Breast epithelium (tissue), 4 donors: ENCODE measurements at regions of chr4 and their contacts with region 1.

Region 1: DNA sequence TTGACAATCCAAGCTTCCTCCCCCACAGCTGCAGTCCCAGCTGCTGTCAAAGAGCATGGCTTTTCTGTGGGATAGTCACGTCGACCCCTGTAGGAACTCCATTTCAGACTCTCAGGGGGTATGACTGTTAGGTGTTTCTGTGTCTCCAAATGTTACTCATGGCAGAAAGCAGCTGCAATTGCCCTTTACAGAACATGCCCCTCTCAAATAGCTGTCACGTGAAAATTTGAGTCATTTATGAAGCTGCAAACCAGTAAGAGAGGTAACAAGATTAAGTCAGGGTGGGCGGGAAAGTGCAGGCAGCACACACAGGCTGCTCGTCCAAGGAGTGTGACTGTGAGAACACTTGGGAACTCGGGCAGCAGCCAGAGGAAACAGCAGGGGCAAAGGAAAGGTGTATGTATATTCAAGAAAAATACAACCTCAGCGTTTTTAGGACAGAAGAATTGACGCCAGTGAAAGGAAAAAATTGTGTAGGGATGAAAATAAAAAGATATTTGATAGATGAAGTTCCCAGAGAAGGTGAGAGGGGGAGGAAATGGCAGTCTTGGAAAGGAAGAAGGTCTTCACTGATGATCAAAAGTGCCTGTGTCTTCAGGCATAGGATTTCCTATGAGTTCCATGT is 66.5 kb upstream of the TMEM184C start:
- DNase-seq: no peak
- H3K4me3 ChIP-seq: peak overlapping the region in 1 of 3 donors; percentile 25
- H3K27ac ChIP-seq: no peak overlapping the region
- H3K4me1 ChIP-seq: no peaks in the 10 kb centered on the region
- H3K27me3 ChIP-seq: no peaks in the 10 kb centered on the region
- CTCF ChIP-seq: no peak
- POLR2A ChIP-seq: no peak

Region 2: GRCh38 chr4:146577111-146577510 is 973.6 kb before region 1 on chr4:
- intact Hi-C with region 1: loop called (anchors 5 kb)
- DNase-seq: no peak
- H3K4me3 ChIP-seq: no peak overlapping the region
- H3K27ac ChIP-seq: no peak overlapping the region
- H3K4me1 ChIP-seq: no peaks in the 10 kb centered on the region
- H3K27me3 ChIP-seq: no peaks in the 10 kb centered on the region
- CTCF ChIP-seq: no peak
- POLR2A ChIP-seq: no peak

Region 3: GRCh38 chr4:147498031-147498660 is 52.6 kb before region 1 on chr4:
- intact Hi-C with region 1: no loop called
- DNase-seq: no peak
- H3K4me3 ChIP-seq: no peak overlapping the region
- H3K27ac ChIP-seq: no peak overlapping the region
- H3K4me1 ChIP-seq: no peaks in the 10 kb centered on the region
- H3K27me3 ChIP-seq: no peaks in the 10 kb centered on the region
- CTCF ChIP-seq: no peak
- POLR2A ChIP-seq: no peak

Region 4: GRCh38 chr4:147530723-147531122 is 20.0 kb before region 1 on chr4:
- intact Hi-C with region 1: no loop called
- DNase-seq: no peak
- H3K4me3 ChIP-seq: no peak overlapping the region
- H3K27ac ChIP-seq: no peak overlapping the region
- H3K4me1 ChIP-seq: no peaks in the 10 kb centered on the region
- H3K27me3 ChIP-seq: no peaks in the 10 kb centered on the region
- CTCF ChIP-seq: no peak
- POLR2A ChIP-seq: no peak

Region 5: GRCh38 chr4:149176039-149176438 is 1625.3 kb after region 1 on chr4:
- intact Hi-C with region 1: loop called (anchors 10 kb)
- DNase-seq: no peak
- H3K4me3 ChIP-seq: no peak overlapping the region
- H3K27ac ChIP-seq: no peak overlapping the region
- H3K4me1 ChIP-seq: no peaks in the 10 kb centered on the region
- H3K27me3 ChIP-seq: no peaks in the 10 kb centered on the region
- CTCF ChIP-seq: no peak
- POLR2A ChIP-seq: no peak